ENCODE measurements at regions of chr9 and their contacts with region 1.

Region 1: GRCh38 chr9:68653141-68653595 is 51.9 kb upstream of the PIP5K1B start:
- DNase-seq: peak; percentile 12
- H3K4me3 Mint-ChIP-seq: peak overlapping the region; percentile 35
- H3K27ac Mint-ChIP-seq: peak overlapping the region; percentile 88
- H3K4me1 Mint-ChIP-seq: peaks cover 52% of the 10 kb centered on the region
- H3K27me3 Mint-ChIP-seq: peaks cover 4% of the 10 kb centered on the region

Region 2: GRCh38 chr9:68631811-68632210 is 21.4 kb before region 1 on chr9:
- intact Hi-C with region 1: no loop called
- DNase-seq: no peak
- H3K4me3 Mint-ChIP-seq: no peak overlapping the region
- H3K27ac Mint-ChIP-seq: no peak overlapping the region
- H3K4me1 Mint-ChIP-seq: no peaks in the 10 kb centered on the region
- H3K27me3 Mint-ChIP-seq: peaks cover 6% of the 10 kb centered on the region

Region 3: GRCh38 chr9:68704814-68705530 is 51.8 kb after region 1 on chr9 and contains the start of gene PIP5K1B:
- intact Hi-C with region 1: loop called (anchors 1 kb)
- DNase-seq: peak; percentile 44
- H3K4me3 Mint-ChIP-seq: peak within 1 kb of the TSS; percentile 85
- H3K27ac Mint-ChIP-seq: peak within 1 kb of the TSS; percentile 81
- H3K4me1 Mint-ChIP-seq: peaks cover 27% of the 10 kb centered on the region
- H3K27me3 Mint-ChIP-seq: peaks cover 57% of the 10 kb centered on the region
- total RNA-seq, gene PIP5K1B: 77.4 and 78.5 TPM in 2 replicates

Region 4: GRCh38 chr9:68802525-68803015 is 149.4 kb after region 1 on chr9:
- intact Hi-C with region 1: loop called (anchors 1 kb)
- DNase-seq: peak; percentile 31
- H3K4me3 Mint-ChIP-seq: no peak overlapping the region
- H3K27ac Mint-ChIP-seq: no peak overlapping the region
- H3K4me1 Mint-ChIP-seq: peaks cover 18% of the 10 kb centered on the region
- H3K27me3 Mint-ChIP-seq: peaks cover 3% of the 10 kb centered on the region

Region 5: GRCh38 chr9:68974431-68974830 is 321.3 kb after region 1 on chr9:
- intact Hi-C with region 1: loop called (anchors 1 kb)
- DNase-seq: peak; percentile 22
- H3K4me3 Mint-ChIP-seq: peak overlapping the region; percentile 60
- H3K27ac Mint-ChIP-seq: peak overlapping the region; percentile 87
- H3K4me1 Mint-ChIP-seq: peaks cover 69% of the 10 kb centered on the region
- H3K27me3 Mint-ChIP-seq: no peaks in the 10 kb centered on the region

Region 6: GRCh38 chr9:69027355-69028096 is 374.4 kb after region 1 on chr9:
- intact Hi-C with region 1: loop called (anchors 1 kb)
- DNase-seq: peak; percentile 32
- H3K4me3 Mint-ChIP-seq: no peak overlapping the region
- H3K27ac Mint-ChIP-seq: peak overlapping the region; percentile 18
- H3K4me1 Mint-ChIP-seq: peaks cover 51% of the 10 kb centered on the region
- H3K27me3 Mint-ChIP-seq: peaks cover 1% of the 10 kb centered on the region